IMR-90 (cell line): ENCODE measurements at regions of chr3 and their contacts with region 1.

Region 1: GRCh38 chr3:32026593-32026992 is 45.0 kb downstream of the ZNF860 start:
- DNase-seq: no peak
- ATAC-seq: no peak
- H3K4me3 ChIP-seq: no peak overlapping the region
- H3K27ac ChIP-seq: no peak overlapping the region
- H3K4me1 ChIP-seq: no peaks in the 10 kb centered on the region
- H3K27me3 ChIP-seq: no peaks in the 10 kb centered on the region; the same call in 1 of the 2 replicates
- CTCF ChIP-seq: no peak
- POLR2A ChIP-seq: no peak
- RAD21 ChIP-seq: no peak

Region 2: DNA sequence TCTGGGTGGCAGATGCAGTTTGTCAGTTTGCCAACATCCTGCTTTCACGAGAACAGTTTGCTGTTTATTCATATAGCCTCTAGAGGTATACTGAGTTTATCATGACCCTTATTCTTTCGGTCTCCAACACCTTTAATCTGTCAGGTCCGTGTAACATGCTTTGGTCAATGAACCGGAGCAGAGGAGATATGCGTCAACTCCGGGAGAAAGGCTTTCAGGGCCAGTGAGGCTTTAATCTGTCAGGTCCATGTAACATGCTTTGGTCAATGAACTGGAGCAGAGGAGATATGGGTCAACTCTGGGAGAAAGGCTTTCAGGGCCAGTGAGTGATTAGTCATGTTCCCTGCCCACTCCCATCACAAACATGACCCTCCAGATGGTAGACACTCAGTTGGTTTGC is 62.9 kb after region 1 on chr3:
- CTCF ChIA-PET with region 1: no interaction called
- POLR2A ChIA-PET with region 1: interaction called, 20 read pairs
- dilution Hi-C with region 1: no loop called
- in situ Hi-C with region 1: no loop called
- intact Hi-C with region 1: no loop called
- DNase-seq: no peak
- ATAC-seq: no peak
- H3K4me3 ChIP-seq: no peak overlapping the region
- H3K27ac ChIP-seq: no peak overlapping the region
- H3K4me1 ChIP-seq: no peaks in the 10 kb centered on the region
- H3K27me3 ChIP-seq: no peaks in the 10 kb centered on the region; the same call in 1 of the 2 replicates
- CTCF ChIP-seq: no peak
- POLR2A ChIP-seq: no peak
- RAD21 ChIP-seq: no peak